Natural killer cell (primary cell): ENCODE measurements at regions of chr1 and their contacts with region 1.

Region 1: DNA sequence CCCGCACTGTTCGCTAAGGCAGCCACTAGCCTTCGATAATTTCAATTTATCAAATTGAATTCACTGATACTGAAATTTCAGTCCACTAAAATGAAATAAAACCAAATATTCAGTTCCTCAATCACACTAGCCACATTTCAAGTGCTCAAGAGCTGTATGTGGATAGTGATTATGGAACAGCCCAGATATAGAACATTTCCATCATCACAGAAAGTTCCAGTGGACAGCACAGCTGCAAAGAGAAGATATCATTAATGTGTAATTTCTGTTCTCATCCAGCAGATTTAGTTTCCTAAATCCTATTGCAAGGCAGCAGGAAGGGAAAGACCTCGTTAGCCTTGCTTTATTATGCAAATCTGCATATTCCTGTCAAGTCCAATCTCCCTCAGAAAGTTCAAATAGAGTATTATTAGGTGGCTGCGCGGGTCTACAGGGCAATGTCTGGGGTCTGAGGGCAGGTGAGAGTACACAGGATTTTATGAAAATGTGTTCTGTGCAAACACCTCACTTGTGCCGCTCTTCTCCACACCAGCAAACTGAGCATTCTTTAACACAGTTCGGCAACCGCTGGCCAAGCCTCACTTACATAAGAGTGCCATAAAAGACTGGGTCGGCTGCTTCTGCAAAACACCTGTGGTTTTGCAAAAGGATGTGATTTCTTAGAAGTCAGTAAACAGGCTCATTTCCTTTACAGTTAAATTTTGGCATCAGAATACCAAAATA is 22.4 kb downstream of the CAPZB start:
- DNase-seq: peak; percentile 39 to 87
- ATAC-seq: peak; percentile 86 to 93 (median 89)
- H3K4me3 ChIP-seq: no peak overlapping the region
- H3K4me3 Mint-ChIP-seq: peak overlapping the region; percentile 91
- H3K27ac ChIP-seq: peak overlapping the region; percentile 85
- H3K27ac Mint-ChIP-seq: peak overlapping the region; percentile 89 to 92
- H3K4me1 ChIP-seq: peaks cover 86% of the 10 kb centered on the region
- H3K4me1 Mint-ChIP-seq: peaks cover 63 to 70% of the 10 kb centered on the region in 2 donors
- H3K27me3 ChIP-seq: no peaks in the 10 kb centered on the region
- H3K27me3 Mint-ChIP-seq: no peaks in the 10 kb centered on the region
- CTCF ChIP-seq: no peak

Region 2: GRCh38 chr1:19300211-19300610 is 162.7 kb before region 1 on chr1:
- intact Hi-C with region 1: no loop called
- DNase-seq: no peak
- ATAC-seq: no peak
- H3K4me3 ChIP-seq: no peak overlapping the region
- H3K4me3 Mint-ChIP-seq: no peak overlapping the region
- H3K27ac ChIP-seq: no peak overlapping the region
- H3K27ac Mint-ChIP-seq: no peak overlapping the region
- H3K4me1 ChIP-seq: no peaks in the 10 kb centered on the region
- H3K4me1 Mint-ChIP-seq: no peaks in the 10 kb centered on the region
- H3K27me3 ChIP-seq: no peaks in the 10 kb centered on the region
- H3K27me3 Mint-ChIP-seq: no peaks in the 10 kb centered on the region
- CTCF ChIP-seq: no peak

Region 3: GRCh38 chr1:19477284-19478249 is 14.6 kb after region 1 on chr1:
- intact Hi-C with region 1: loop called (anchors 2 kb)
- DNase-seq: peak; percentile 55 to 74
- ATAC-seq: peak; percentile 73 to 85 (median 77)
- H3K4me3 ChIP-seq: peak overlapping the region; percentile 34
- H3K4me3 Mint-ChIP-seq: peak overlapping the region; percentile 88
- H3K27ac ChIP-seq: peak overlapping the region; percentile 97
- H3K27ac Mint-ChIP-seq: peak overlapping the region; percentile 97 to 98
- H3K4me1 ChIP-seq: peaks cover 85% of the 10 kb centered on the region
- H3K4me1 Mint-ChIP-seq: peaks cover 79 to 80% of the 10 kb centered on the region in 2 donors
- H3K27me3 ChIP-seq: no peaks in the 10 kb centered on the region
- H3K27me3 Mint-ChIP-seq: no peaks in the 10 kb centered on the region
- CTCF ChIP-seq: no peak

Region 4: DNA sequence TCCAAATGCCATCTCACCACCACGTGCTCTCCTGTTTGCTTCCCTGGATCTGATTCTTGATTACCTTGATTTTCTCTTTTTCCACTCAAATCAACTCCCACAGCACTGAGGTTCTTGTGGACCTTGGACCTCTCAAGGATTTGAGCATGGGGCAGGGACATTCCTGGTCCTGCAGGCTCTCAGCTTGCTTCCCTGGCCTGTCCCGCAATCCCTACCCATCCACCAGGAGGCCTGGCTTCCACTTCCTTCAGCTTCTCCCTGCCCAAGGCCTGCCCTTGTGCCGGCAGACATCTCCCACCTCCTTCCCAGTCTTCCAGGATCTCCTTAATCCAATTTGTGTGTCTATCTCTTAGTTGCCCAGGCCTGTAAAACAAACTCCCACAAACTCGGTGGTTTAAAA is 494.8 kb after region 1 on chr1:
- intact Hi-C with region 1: no loop called
- DNase-seq: no peak
- ATAC-seq: no peak
- H3K4me3 ChIP-seq: no peak overlapping the region
- H3K4me3 Mint-ChIP-seq: no peak overlapping the region
- H3K27ac ChIP-seq: no peak overlapping the region
- H3K27ac Mint-ChIP-seq: no peak overlapping the region
- H3K4me1 ChIP-seq: no peaks in the 10 kb centered on the region
- H3K4me1 Mint-ChIP-seq: no peaks in the 10 kb centered on the region
- H3K27me3 ChIP-seq: no peaks in the 10 kb centered on the region
- H3K27me3 Mint-ChIP-seq: peaks cover 36 to 40% of the 10 kb centered on the region in 2 donors
- CTCF ChIP-seq: no peak